PC-9 (cell line): ENCODE measurements at regions of chr11 and their contacts with region 1.

Region 1: GRCh38 chr11:15327786-15328231 is 213.1 kb downstream of the INSC start:
- DNase-seq: peak in 1 of 2 experiments; percentile 31
- H3K4me3 ChIP-seq: no peak overlapping the region
- H3K27ac ChIP-seq: no peak overlapping the region
- H3K4me1 ChIP-seq: no peaks in the 10 kb centered on the region
- H3K27me3 ChIP-seq: no peaks in the 10 kb centered on the region
- CTCF ChIP-seq: peak; percentile 75

Region 2: GRCh38 chr11:15307619-15308024 is 20.2 kb before region 1 on chr11:
- CTCF ChIA-PET with region 1: no interaction called
- POLR2A ChIA-PET with region 1: no interaction called
- intact Hi-C with region 1: no loop called
- DNase-seq: no peak
- H3K4me3 ChIP-seq: no peak overlapping the region
- H3K27ac ChIP-seq: no peak overlapping the region
- H3K4me1 ChIP-seq: no peaks in the 10 kb centered on the region
- H3K27me3 ChIP-seq: no peaks in the 10 kb centered on the region
- CTCF ChIP-seq: no peak

Region 3: DNA sequence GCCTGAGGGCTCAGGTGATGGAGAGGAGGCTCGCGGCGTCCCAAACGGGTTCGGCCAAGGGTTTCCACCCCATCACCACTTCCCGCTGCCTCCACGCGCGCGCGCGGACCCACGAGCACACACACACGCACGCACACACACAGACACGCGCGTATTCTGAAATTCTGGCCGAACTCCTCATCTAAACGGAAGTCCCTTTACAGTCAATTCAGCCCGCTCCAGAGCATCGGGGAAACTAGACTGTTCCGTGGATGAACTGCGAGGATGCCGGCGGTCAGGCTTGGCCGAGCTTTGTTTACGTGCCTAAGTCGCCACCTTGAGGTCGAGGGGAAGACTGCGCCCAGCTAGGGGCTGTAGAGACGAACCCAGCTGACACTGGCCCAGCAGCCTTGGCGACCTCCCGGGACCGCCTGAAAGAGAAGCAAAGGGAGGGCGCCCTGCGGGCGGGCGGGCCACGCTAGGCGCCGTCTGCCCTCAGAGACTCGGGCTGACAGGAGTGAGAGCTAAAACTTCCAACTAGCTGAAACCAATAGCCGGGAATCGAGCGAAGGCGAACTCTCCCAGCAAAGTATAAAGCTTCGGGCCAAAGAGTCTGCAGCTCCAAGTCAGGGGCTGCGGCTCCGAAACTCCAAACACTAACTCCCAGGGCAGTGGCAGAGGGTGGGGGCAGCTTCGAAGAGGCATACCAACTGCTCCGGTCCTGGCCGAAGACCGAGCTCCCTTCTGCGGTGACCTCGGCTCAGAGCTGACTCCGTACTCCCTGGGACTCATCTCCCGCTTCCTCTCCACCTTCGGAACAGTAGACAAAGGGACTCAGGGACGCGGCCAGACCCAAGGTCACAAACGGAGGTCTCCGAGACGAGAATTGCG is 1285.9 kb after region 1 on chr11:
- CTCF ChIA-PET with region 1: no interaction called
- POLR2A ChIA-PET with region 1: no interaction called
- intact Hi-C with region 1: loop called (anchors 1 kb)
- DNase-seq: peak; percentile 51 to 74
- H3K4me3 ChIP-seq: peak overlapping the region; percentile 54
- H3K27ac ChIP-seq: no peak overlapping the region
- H3K4me1 ChIP-seq: no peaks in the 10 kb centered on the region
- H3K27me3 ChIP-seq: no peaks in the 10 kb centered on the region
- CTCF ChIP-seq: peak; percentile 77